ENCODE measurements at regions of chr19 and their contacts with region 1.

Region 1: GRCh38 chr19:40662921-40663694 is 27.3 kb downstream of the NUMBL start:
- DNase-seq: peak; percentile 95
- ATAC-seq: peak; percentile 85
- H3K4me3 Mint-ChIP-seq: peak overlapping the region; percentile 80
- H3K27ac Mint-ChIP-seq: no peak overlapping the region
- H3K4me1 Mint-ChIP-seq: peaks cover 2% of the 10 kb centered on the region; the same call in 1 of the 2 replicates
- H3K27me3 Mint-ChIP-seq: peaks cover 18% of the 10 kb centered on the region
- CTCF ChIP-seq: peak; percentile 97

Region 2: GRCh38 chr19:40674291-40674690 is 11.2 kb after region 1 on chr19:
- CTCF ChIA-PET with region 1: no interaction called
- POLR2A ChIA-PET with region 1: no interaction called
- DNase-seq: no peak
- ATAC-seq: no peak
- H3K4me3 Mint-ChIP-seq: no peak overlapping the region
- H3K27ac Mint-ChIP-seq: no peak overlapping the region
- H3K4me1 Mint-ChIP-seq: no peaks in the 10 kb centered on the region
- H3K27me3 Mint-ChIP-seq: no peaks in the 10 kb centered on the region
- CTCF ChIP-seq: no peak

Region 3: GRCh38 chr19:40702337-40703012 is 39.4 kb after region 1 on chr19:
- CTCF ChIA-PET with region 1: interaction called, 55 read pairs
- POLR2A ChIA-PET with region 1: no interaction called
- DNase-seq: peak; percentile 78
- ATAC-seq: peak; percentile 95
- H3K4me3 Mint-ChIP-seq: no peak overlapping the region
- H3K27ac Mint-ChIP-seq: peak overlapping the region; percentile 85
- H3K4me1 Mint-ChIP-seq: peaks cover 8% of the 10 kb centered on the region; the same call in 1 of the 2 replicates
- H3K27me3 Mint-ChIP-seq: no peaks in the 10 kb centered on the region
- CTCF ChIP-seq: peak; percentile 18; the same call in 1 of the 2 replicates

Region 4: DNA sequence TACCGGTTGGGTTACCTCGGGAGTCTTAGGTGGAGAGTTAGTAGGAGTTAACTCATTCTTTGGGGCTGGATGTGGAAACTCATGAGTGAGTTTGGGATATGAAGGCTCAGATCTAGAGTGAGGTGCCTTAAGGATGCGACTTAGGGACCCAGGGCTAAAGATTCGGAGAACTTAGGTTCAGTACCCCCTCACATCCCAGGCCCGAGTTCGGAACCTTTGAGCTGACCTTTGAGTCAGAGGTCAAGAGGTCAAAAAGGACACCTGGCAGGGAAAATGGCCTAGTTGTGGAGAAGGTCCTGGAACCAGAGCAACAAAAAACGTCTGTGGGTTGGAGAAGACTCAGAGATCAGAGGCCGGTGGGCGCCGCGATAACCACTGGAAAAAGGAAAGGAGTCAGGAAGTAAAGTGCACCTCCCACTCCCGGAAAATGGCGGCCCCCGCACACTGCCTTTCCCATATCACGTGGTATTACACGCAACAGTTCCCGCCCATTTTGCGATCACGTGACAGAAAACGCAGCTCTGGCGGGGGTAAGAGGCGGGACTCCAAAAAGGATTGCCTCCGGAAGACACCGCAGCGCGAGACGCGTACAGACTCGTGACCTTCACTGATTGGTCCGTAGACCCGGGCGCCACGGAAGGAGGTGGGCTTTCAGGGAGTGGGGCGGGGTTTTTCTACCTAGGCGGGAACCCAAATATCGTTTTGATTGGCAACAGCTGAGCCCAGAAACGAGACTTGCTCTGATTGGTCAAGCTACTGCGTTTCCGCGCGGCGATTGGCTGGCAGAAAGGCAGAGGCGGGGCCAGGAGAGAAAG is 87.2 kb after region 1 on chr19 and contains the start of gene ACTMAP:
- CTCF ChIA-PET with region 1: interaction called, 10 read pairs
- POLR2A ChIA-PET with region 1: interaction called, 4 read pairs
- DNase-seq: peak; percentile 99
- ATAC-seq: peak; percentile 93
- H3K4me3 Mint-ChIP-seq: peak within 1 kb of the TSS; percentile 99
- H3K27ac Mint-ChIP-seq: peak within 1 kb of the TSS; percentile 100
- H3K4me1 Mint-ChIP-seq: peaks cover 38% of the 10 kb centered on the region
- H3K27me3 Mint-ChIP-seq: no peaks in the 10 kb centered on the region
- CTCF ChIP-seq: no peak
- total RNA-seq, gene ACTMAP: 29.6 to 42.4 TPM (median 40.2 TPM) in 3 replicates

Region 5: GRCh38 chr19:40806488-40807468 is 143.7 kb after region 1 on chr19:
- CTCF ChIA-PET with region 1: interaction called, 25 read pairs
- POLR2A ChIA-PET with region 1: no interaction called
- DNase-seq: peak; percentile 96
- ATAC-seq: peak; percentile 60
- H3K4me3 Mint-ChIP-seq: peak overlapping the region; percentile 39
- H3K27ac Mint-ChIP-seq: peak overlapping the region; percentile 85
- H3K4me1 Mint-ChIP-seq: peaks cover 73% of the 10 kb centered on the region
- H3K27me3 Mint-ChIP-seq: no peaks in the 10 kb centered on the region; the same call in 1 of the 2 replicates
- CTCF ChIP-seq: peak; percentile 77

Measured in WTC11 (cell line).